PC-9 (cell line): ENCODE measurements at regions of chr22 and their contacts with region 1.

Region 1: DNA sequence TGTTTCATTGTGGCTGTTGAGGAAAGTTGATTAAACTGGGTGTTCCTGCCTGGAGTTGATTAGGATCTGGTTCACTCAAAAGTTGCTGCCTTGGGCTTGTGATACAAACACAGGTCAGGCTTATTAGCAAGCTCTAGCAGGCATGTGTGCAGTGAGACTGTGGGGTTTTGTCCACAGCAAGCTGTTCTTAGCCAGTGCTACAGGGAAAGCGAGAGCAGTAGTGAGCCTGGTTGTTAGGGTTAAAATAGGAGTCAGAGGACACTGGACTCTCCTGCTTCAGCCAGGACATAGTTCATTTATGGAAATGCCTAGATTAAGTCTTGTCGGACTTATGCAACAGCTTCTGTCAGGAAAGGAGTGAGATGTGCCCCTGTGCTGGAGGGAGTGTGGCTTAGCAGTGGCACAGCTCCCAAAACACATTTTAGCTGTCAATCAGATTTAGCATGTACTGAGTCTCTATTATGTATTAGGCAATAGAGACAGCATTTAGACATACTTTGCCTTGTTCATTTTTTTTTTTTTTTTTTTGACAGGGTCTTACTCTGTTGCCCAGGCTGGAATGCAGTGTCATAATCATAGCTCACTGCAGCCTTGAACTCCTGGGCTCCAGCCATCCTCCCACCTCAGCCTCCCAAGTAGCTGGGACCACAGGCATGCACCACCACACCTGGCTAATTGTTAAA is 8.7 kb downstream of the SNRPD3 start:
- DNase-seq: no peak
- H3K4me3 ChIP-seq: no peak overlapping the region
- H3K27ac ChIP-seq: no peak overlapping the region
- H3K4me1 ChIP-seq: no peaks in the 10 kb centered on the region
- H3K27me3 ChIP-seq: no peaks in the 10 kb centered on the region
- CTCF ChIP-seq: no peak

Region 2: GRCh38 chr22:24060375-24060788 is 504.1 kb before region 1 on chr22:
- CTCF ChIA-PET with region 1: interaction called, 13 read pairs
- POLR2A ChIA-PET with region 1: no interaction called
- intact Hi-C with region 1: no loop called
- DNase-seq: no peak
- H3K4me3 ChIP-seq: no peak overlapping the region
- H3K27ac ChIP-seq: no peak overlapping the region
- H3K4me1 ChIP-seq: no peaks in the 10 kb centered on the region
- H3K27me3 ChIP-seq: no peaks in the 10 kb centered on the region
- CTCF ChIP-seq: no peak

Region 3: DNA sequence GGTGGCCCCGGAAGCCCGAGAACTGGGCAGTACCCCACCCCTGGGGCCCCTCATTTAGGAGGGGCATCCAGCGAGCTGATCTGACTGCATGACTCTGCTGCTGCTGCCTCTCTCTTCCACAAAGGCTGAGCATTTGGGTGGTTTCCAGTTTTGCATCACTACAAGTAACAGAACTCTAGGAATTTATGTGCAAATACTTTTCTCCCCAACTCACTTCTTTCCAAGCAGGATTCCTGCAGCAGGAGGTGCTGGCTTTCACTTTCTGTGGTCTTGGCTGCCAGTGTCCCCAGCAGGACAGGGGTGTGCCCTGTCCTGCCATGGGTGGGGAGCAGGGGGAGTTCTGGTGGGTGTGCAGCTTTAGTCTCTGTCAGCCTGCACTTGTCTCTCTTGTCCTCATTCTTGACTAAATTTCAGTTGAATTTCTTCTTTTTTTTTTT is 48.2 kb before region 1 on chr22:
- CTCF ChIA-PET with region 1: no interaction called
- POLR2A ChIA-PET with region 1: no interaction called
- intact Hi-C with region 1: no loop called
- DNase-seq: peak; percentile 33 to 73
- H3K4me3 ChIP-seq: no peak overlapping the region
- H3K27ac ChIP-seq: no peak overlapping the region
- H3K4me1 ChIP-seq: peaks cover 25% of the 10 kb centered on the region
- H3K27me3 ChIP-seq: no peaks in the 10 kb centered on the region
- CTCF ChIP-seq: no peak

Region 4: GRCh38 chr22:24977370-24978221 is 413.1 kb after region 1 on chr22:
- CTCF ChIA-PET with region 1: no interaction called
- POLR2A ChIA-PET with region 1: no interaction called
- intact Hi-C with region 1: no loop called
- DNase-seq: no peak
- H3K4me3 ChIP-seq: no peak overlapping the region
- H3K27ac ChIP-seq: no peak overlapping the region
- H3K4me1 ChIP-seq: no peaks in the 10 kb centered on the region
- H3K27me3 ChIP-seq: no peaks in the 10 kb centered on the region
- CTCF ChIP-seq: no peak